A673 (cell line): ENCODE measurements at regions of chr11 and their contacts with region 1.

Region 1: DNA sequence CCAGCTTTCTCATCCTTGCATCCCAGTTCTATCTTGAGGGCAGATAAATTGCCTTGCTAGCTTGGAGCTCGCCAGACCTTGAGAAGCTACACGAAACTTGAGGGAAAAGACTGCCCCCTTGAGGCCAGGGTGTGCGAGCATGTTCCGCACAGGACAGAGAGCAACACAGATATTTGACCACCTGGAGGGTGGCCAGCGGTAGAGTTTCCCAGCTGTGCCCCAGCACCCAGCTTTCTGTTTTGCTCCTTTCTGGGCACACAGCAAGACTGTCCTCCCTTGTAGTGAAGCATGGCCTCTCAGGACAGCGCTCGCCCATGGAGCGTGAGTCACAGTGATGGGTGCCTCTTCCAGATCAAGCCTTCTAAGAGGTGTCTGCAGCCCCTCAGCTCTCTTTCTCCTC is 23.5 kb downstream of the SPATA19 start:
- DNase-seq: peak; percentile 70
- H3K4me3 ChIP-seq: no peak overlapping the region
- H3K27ac ChIP-seq: no peak overlapping the region
- H3K4me1 ChIP-seq: no peaks in the 10 kb centered on the region
- H3K27me3 ChIP-seq: no peaks in the 10 kb centered on the region
- CTCF ChIP-seq: peak; percentile 85

Region 2: GRCh38 chr11:133078591-133079404 is 743.0 kb before region 1 on chr11:
- CTCF ChIA-PET with region 1: interaction called, 3 read pairs
- POLR2A ChIA-PET with region 1: interaction called, 3 read pairs
- intact Hi-C with region 1: loop called (anchors 5 kb)
- DNase-seq: peak; percentile 71
- H3K4me3 ChIP-seq: no peak overlapping the region
- H3K27ac ChIP-seq: no peak overlapping the region
- H3K4me1 ChIP-seq: no peaks in the 10 kb centered on the region
- H3K27me3 ChIP-seq: peaks cover 45% of the 10 kb centered on the region
- CTCF ChIP-seq: peak; percentile 94

Region 3: GRCh38 chr11:133134314-133135173 is 687.2 kb before region 1 on chr11:
- CTCF ChIA-PET with region 1: interaction called, 13 read pairs
- POLR2A ChIA-PET with region 1: no interaction called
- intact Hi-C with region 1: loop called (anchors 5 kb)
- DNase-seq: peak; percentile 62
- H3K4me3 ChIP-seq: no peak overlapping the region
- H3K27ac ChIP-seq: no peak overlapping the region
- H3K4me1 ChIP-seq: no peaks in the 10 kb centered on the region
- H3K27me3 ChIP-seq: peaks cover 2% of the 10 kb centered on the region
- CTCF ChIP-seq: peak; percentile 87

Region 4: DNA sequence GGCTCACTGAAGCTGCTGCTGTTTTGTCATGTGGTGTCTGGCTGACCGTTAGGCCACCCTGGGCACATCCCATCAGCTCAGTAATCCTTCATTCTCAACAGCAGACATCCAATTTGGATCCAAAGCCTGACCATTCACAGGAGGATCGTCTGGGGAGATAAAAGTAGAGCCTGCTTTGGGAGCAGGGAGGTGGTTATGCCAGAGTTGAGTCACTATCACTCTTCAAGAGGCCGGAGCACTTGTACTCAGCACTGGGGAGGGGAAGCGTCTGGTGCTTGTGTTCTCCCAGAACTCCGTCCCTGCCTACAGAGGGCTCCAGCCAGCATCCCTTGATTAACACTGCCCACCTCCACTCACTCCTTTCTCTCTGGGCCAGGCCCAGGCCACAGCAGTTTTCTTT is 672.1 kb before region 1 on chr11:
- CTCF ChIA-PET with region 1: no interaction called
- POLR2A ChIA-PET with region 1: no interaction called
- intact Hi-C with region 1: no loop called
- DNase-seq: no peak
- H3K4me3 ChIP-seq: no peak overlapping the region
- H3K27ac ChIP-seq: no peak overlapping the region
- H3K4me1 ChIP-seq: no peaks in the 10 kb centered on the region
- H3K27me3 ChIP-seq: peaks cover 62% of the 10 kb centered on the region
- CTCF ChIP-seq: no peak

Region 5: GRCh38 chr11:133692126-133692934 is 129.4 kb before region 1 on chr11:
- CTCF ChIA-PET with region 1: interaction called, 12 read pairs
- POLR2A ChIA-PET with region 1: no interaction called
- intact Hi-C with region 1: no loop called
- DNase-seq: no peak
- H3K4me3 ChIP-seq: no peak overlapping the region
- H3K27ac ChIP-seq: no peak overlapping the region
- H3K4me1 ChIP-seq: no peaks in the 10 kb centered on the region
- H3K27me3 ChIP-seq: no peaks in the 10 kb centered on the region
- CTCF ChIP-seq: no peak

Region 6: DNA sequence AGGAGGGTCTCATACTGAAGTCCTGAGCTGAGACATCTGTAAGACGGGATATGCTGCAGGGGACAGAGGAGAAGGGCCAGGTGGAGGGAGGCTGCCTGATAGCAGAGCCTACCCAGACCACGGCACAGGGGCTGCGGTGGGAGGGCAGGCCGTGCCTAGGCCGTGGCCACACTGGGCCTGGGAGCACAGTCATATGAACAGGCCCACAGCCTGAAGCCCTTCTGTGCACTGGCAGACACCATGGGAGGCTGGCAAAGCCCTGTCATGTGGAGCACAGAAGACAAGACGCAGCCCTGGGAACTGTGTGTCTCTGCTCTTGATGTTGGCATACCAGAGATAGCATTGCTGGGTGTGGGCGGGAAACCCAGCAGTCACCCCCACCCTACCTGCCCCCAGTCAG is 20.3 kb after region 1 on chr11:
- CTCF ChIA-PET with region 1: no interaction called
- POLR2A ChIA-PET with region 1: no interaction called
- intact Hi-C with region 1: no loop called
- DNase-seq: no peak
- H3K4me3 ChIP-seq: no peak overlapping the region
- H3K27ac ChIP-seq: no peak overlapping the region
- H3K4me1 ChIP-seq: no peaks in the 10 kb centered on the region
- H3K27me3 ChIP-seq: peaks cover 11% of the 10 kb centered on the region
- CTCF ChIP-seq: no peak